H1 (cell line): ENCODE measurements at regions of chr1 and their contacts with region 1.

Region 1: DNA sequence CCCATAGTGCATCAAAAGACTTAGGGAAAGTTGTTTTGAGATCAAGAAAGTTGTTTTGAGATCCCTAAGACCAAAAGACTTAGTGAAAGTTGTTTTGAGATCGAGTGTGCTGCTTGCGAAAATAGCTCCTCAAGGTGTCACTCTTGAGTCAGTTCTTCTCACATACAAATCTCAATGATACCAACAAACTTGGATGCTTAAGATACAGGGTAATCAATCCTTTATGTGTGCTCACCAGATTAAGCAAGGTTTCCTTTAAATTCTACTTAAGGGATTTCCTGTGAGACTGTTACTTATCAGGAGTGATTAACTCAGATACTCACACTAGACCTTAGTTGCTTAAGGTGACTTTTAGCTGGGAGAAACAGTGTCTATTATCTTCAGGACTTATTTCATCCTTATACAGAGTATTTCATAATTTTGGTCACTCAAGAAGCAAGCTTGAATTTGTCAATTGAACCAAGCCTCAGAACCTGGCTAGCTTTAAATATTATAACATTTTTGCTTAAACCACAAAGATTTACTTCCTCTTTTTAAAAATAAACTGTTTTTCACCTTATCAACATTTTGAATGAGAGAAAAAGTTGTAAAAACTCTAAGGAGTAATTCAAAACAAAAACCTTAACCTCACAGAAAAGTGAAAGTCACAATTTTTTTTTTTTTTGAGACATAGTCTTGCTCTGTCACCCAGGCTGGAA is 8.0 kb upstream of the RLF start:
- DNase-seq: no peak
- H3K4me3 ChIP-seq: no peak overlapping the region
- H3K27ac ChIP-seq: no peak overlapping the region
- H3K4me1 ChIP-seq: no peaks in the 10 kb centered on the region
- H3K27me3 ChIP-seq: no peaks in the 10 kb centered on the region
- CTCF ChIP-seq: peak in 2 of 3 experiments; percentile 59 to 78; a peak in 3 of 4 replicates
- EP300 ChIP-seq: no peak
- POLR2A ChIP-seq: no peak
- RAD21 ChIP-seq: peak; percentile 68 to 73

Region 2: GRCh38 chr1:40078512-40079333 is 74.5 kb before region 1 on chr1:
- CTCF ChIA-PET with region 1: interaction called, 13 read pairs
- POLR2A ChIA-PET with region 1: no interaction called
- DNase-seq: peak in 1 of 2 experiments; percentile 79
- H3K4me3 ChIP-seq: no peak overlapping the region
- H3K27ac ChIP-seq: no peak overlapping the region
- H3K4me1 ChIP-seq: no peaks in the 10 kb centered on the region
- H3K27me3 ChIP-seq: no peaks in the 10 kb centered on the region
- CTCF ChIP-seq: peak; percentile 42 to 80 (median 66)
- EP300 ChIP-seq: no peak
- POLR2A ChIP-seq: no peak
- RAD21 ChIP-seq: peak; percentile 69 to 74

Region 3: DNA sequence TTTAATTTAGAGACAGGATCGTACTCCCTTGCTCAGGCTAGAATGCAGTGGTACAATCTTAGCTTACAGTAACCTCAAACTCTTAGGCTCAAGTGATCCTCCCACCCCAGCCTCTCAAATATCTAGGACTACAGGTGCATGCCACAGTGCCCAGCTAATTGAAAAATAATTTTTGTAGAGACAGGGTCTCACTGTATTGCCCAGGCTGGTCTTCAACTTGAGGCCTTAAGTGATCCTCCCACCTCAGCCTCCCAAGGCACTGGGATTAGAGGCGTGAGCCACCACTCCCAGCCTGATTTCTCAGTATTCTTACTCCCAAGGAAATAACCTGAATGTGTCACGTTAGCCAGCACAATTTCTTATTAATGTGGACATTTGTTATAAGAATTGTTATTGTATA is 17.8 kb after region 1 on chr1:
- CTCF ChIA-PET with region 1: interaction called, 11 read pairs
- POLR2A ChIA-PET with region 1: no interaction called
- DNase-seq: no peak
- H3K4me3 ChIP-seq: no peak overlapping the region
- H3K27ac ChIP-seq: no peak overlapping the region
- H3K4me1 ChIP-seq: no peaks in the 10 kb centered on the region
- H3K27me3 ChIP-seq: no peaks in the 10 kb centered on the region
- CTCF ChIP-seq: no peak
- EP300 ChIP-seq: no peak
- POLR2A ChIP-seq: no peak
- RAD21 ChIP-seq: no peak

Region 4: GRCh38 chr1:40241362-40241761 is 88.1 kb after region 1 on chr1:
- CTCF ChIA-PET with region 1: interaction called, 13 read pairs
- POLR2A ChIA-PET with region 1: interaction called, 3 read pairs
- DNase-seq: no peak
- H3K4me3 ChIP-seq: no peak overlapping the region
- H3K27ac ChIP-seq: no peak overlapping the region
- H3K4me1 ChIP-seq: no peaks in the 10 kb centered on the region
- H3K27me3 ChIP-seq: peaks cover 0 to 1% (median 0%) of the 10 kb centered on the region in 4 experiments; a peak in 1 of 7 replicates
- CTCF ChIP-seq: no peak
- EP300 ChIP-seq: no peak
- POLR2A ChIP-seq: no peak
- RAD21 ChIP-seq: no peak

Region 5: DNA sequence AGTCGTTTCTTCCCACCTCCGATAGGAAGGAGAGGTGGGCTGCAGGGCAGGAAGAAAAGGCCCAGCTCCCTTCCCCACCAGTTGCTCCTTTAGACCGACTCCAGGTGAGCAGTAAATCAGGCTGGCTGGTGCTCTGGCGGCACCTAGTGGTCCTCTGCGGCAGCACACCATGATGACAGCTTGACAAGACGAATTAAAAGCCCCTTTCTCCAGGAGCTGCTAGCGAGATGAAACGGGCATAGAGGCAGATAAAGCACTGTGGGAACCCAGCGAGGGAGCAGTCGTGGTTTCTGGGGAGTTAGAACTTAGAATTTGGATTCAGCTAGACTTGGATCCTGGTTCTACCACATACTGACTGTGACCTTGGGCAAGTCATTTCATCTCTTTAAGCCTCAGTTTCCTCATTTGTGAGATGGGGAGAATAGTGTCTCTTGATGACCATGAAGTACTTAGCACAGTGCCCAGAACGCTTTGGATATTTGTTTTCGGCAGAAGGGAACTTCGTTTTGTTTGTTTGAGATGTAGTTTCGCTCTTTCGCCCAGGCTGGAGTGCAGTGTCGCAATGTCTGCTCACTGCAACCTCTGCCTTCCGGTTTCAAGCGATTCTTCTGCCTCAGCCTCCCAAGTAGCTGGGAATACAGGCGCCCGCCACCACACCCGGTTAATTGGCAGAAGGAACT is 185.7 kb after region 1 on chr1:
- CTCF ChIA-PET with region 1: interaction called, 108 read pairs
- POLR2A ChIA-PET with region 1: no interaction called
- DNase-seq: peak; percentile 88 to 98
- H3K4me3 ChIP-seq: no peak overlapping the region
- H3K27ac ChIP-seq: no peak overlapping the region
- H3K4me1 ChIP-seq: no peaks in the 10 kb centered on the region
- H3K27me3 ChIP-seq: no peaks in the 10 kb centered on the region
- CTCF ChIP-seq: peak; percentile 98 to 99 (median 98)
- EP300 ChIP-seq: no peak
- POLR2A ChIP-seq: no peak
- RAD21 ChIP-seq: peak; percentile 100